ENCODE measurements at regions of chr7 and their contacts with region 1.

Region 1: DNA sequence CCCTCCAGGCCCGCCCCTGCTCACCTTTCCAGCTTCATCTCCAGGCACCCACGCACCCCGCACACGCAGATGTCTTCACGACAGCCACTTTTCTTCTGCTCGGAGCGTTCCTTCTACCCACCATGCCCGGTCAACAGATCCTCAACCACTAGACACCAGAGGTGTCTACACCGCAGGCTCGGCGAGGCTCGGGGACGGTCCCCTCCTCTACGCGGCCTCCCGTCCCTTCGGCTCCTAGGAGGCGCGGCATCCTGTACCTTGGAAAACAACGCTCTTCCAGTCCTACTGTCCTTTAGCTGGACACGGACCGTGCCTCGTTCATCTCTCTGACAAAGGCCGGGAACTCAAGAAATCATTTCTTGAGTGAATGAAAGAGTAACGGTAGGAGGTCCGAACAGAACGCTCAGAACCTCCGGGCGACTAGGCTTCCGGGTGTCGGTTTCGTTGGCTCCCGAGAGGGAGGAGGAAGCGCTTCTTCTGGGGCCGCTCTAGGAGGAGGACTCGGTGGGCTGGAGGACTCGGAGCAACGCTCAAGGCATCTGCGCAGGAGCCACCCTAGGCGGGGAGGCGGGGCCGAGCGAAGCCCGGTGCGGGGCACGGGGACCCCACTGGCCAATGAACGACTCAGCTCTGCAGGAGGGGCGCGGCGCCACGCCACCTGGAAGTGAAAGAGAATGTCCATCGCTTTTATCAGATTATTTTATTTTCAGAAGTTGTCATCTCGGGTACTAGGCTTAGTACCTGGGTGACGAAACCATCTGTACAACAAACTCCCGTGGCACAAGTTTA is 7.2 kb upstream of the FIS1 start:
- DNase-seq: peak; percentile 94 to 96
- ATAC-seq: peak; percentile 99 to 100
- H3K4me3 ChIP-seq: peak overlapping the region; percentile 80 to 91 (median 90)
- H3K27ac ChIP-seq: peak overlapping the region; percentile 73 to 84 (median 81)
- H3K4me1 ChIP-seq: peaks cover 14 to 15% of the 10 kb centered on the region in 2 donors
- H3K27me3 ChIP-seq: peaks cover 0 to 4% (median 0%) of the 10 kb centered on the region in 3 donors
- CTCF ChIP-seq: no peak
- POLR2A ChIP-seq: peak; percentile 12 to 46

Region 2: DNA sequence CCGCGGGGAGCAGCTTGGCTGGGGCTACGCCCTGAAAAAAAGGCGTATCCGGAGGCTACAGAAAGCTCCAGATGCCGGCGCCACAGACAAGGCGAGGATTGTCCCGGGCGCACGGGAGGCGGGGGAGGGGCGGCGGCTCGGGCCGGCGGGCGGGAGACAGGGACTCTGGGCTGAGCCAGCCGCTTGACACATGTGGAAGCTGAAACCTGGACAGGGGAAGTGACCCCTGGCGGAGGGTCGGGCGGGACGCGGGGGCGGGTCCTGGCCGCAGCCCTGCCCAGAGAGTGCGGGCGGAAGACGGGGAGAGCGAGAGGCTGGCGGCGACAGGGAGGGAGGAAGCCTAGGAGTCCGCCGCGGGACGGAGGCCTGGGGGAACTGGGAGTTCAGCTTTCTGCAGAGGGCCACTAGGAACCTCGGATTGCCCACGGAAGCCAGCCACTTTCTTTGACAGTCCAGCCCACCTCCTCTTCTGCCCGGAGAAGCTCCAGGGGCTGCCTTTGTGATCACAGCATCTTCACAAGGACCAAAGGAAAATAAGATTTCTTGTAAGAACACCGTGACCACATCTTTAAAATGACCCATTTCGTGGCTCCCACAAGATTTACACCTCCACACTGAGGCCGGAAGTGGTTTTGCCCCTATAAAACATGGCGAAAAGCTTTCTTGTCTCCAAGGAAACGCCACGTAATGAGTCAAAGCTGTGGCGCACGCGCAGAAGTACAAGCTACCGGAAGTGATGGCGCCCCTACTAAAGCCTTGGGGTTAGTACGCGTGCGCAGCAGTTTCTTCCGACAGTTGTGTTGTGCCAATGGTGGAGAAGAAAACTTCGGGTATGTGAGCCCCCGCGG is 34.5 kb before region 1 on chr7 and contains the starts of genes PLOD3 and ZNHIT1:
- in situ Hi-C with region 1: no loop called
- intact Hi-C with region 1: loop called (anchors 2 kb)
- DNase-seq: peak; percentile 95 to 96
- ATAC-seq: peak; percentile 98 to 99
- H3K4me3 ChIP-seq: peak within 1 kb of the TSS; percentile 68 to 91 (median 74)
- H3K27ac ChIP-seq: peak within 1 kb of the TSS; percentile 82 to 92 (median 88)
- H3K4me1 ChIP-seq: peaks cover 23 to 32% of the 10 kb centered on the region in 2 donors
- H3K27me3 ChIP-seq: no peaks in the 10 kb centered on the region
- CTCF ChIP-seq: peak in 2 of 5 experiments; percentile 41 to 48
- POLR2A ChIP-seq: peak in 1 of 2 donors; percentile 16
- total RNA-seq, gene PLOD3: 8.2 to 24.2 (median 15.5) TPM
- total RNA-seq, gene ZNHIT1: 66.7 to 83.9 (median 71.9) TPM

Region 3: GRCh38 chr7:101235050-101235449 is 17.0 kb before region 1 on chr7:
- in situ Hi-C with region 1: no loop called
- intact Hi-C with region 1: no loop called
- DNase-seq: no peak
- ATAC-seq: no peak
- H3K4me3 ChIP-seq: no peak overlapping the region
- H3K27ac ChIP-seq: no peak overlapping the region
- H3K4me1 ChIP-seq: peaks cover 19 to 22% of the 10 kb centered on the region in 2 donors
- H3K27me3 ChIP-seq: no peaks in the 10 kb centered on the region
- CTCF ChIP-seq: peak in 2 of 5 experiments; percentile 26 to 35
- POLR2A ChIP-seq: no peak

Region 4: DNA sequence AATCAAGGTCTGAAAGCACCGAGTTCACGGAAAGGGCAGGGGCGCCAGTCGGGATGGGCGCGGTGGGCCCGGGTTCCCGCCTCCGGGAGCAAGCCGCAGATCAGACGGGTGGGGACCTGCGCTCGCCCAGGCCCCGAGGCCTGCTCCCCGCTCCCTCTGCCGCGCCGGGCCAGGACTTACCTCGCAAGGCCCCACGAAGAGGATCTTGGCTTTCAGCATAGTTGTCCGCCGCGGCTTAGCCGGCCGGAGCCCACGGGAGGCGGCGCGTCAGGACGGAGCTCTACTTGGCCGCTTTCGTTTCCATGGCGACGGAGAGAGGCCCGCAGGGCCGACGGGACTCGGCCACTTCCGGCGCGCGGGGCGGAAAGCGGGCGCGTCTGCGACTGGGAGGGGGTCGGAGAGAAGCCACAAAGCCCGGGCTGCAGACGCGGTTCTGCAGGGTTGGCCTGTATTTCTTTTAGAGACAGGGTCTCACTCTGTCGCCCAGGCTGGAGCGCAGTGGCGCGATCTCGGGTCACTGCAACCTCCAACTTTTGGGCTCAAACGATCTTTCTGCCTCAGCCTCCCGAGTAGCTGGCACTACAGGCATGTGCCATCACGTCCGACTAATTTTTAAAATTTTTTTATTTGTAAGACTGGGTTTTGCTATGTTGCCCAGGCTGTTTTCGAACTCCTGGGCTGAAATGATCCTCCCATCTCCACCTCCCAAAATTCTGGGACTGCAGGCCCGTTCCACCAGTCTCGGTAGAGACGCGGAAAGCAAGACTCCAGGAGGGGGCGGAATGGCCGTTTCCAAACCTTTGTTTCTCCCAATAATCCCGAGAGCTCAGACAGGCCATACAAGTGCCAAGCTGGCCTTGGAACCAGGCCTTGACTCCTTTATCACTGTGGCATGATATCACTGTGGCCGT is 69.7 kb after region 1 on chr7 and contains the start of gene IFT22:
- in situ Hi-C with region 1: no loop called
- intact Hi-C with region 1: loop called (anchors 1 kb)
- DNase-seq: peak; percentile 77 to 80
- ATAC-seq: peak; percentile 97 to 98
- H3K4me3 ChIP-seq: peak within 1 kb of the TSS; percentile 69 to 95 (median 89)
- H3K27ac ChIP-seq: peak within 1 kb of the TSS; percentile 65 to 78 (median 74)
- H3K4me1 ChIP-seq: peaks cover 6% of the 10 kb centered on the region in 2 donors
- H3K27me3 ChIP-seq: peaks cover under 1 to 5% (median 4%) of the 10 kb centered on the region in 3 donors
- CTCF ChIP-seq: no peak
- POLR2A ChIP-seq: peak in 1 of 2 donors; percentile 11
- total RNA-seq, gene IFT22: 13.4 to 32.3 (median 28.9) TPM

Measured in gastrocnemius medialis (tissue), 4 donors.